ENCODE measurements at regions of chr6 and their contacts with region 1.

Region 1: GRCh38 chr6:15621203-15622044 is 41.4 kb downstream of the DTNBP1 start:
- DNase-seq: peak; percentile 79
- ATAC-seq: peak; percentile 83

Region 2: GRCh38 chr6:14129575-14129974 is 1491.8 kb before region 1 on chr6:
- intact Hi-C with region 1: loop called (anchors 5 kb)
- DNase-seq: peak; percentile 45
- ATAC-seq: peak; percentile 93

Region 3: GRCh38 chr6:15504581-15505350 is 116.7 kb before region 1 on chr6:
- intact Hi-C with region 1: loop called (anchors 5 kb)
- DNase-seq: peak; percentile 82
- ATAC-seq: peak; percentile 75

Region 4: GRCh38 chr6:15518057-15518456 is 103.4 kb before region 1 on chr6:
- intact Hi-C with region 1: loop called (anchors 5 kb)
- DNase-seq: no peak
- ATAC-seq: no peak

Region 5: GRCh38 chr6:15577550-15578171 is 43.8 kb before region 1 on chr6:
- intact Hi-C with region 1: no loop called
- DNase-seq: no peak
- ATAC-seq: no peak

Region 6: DNA sequence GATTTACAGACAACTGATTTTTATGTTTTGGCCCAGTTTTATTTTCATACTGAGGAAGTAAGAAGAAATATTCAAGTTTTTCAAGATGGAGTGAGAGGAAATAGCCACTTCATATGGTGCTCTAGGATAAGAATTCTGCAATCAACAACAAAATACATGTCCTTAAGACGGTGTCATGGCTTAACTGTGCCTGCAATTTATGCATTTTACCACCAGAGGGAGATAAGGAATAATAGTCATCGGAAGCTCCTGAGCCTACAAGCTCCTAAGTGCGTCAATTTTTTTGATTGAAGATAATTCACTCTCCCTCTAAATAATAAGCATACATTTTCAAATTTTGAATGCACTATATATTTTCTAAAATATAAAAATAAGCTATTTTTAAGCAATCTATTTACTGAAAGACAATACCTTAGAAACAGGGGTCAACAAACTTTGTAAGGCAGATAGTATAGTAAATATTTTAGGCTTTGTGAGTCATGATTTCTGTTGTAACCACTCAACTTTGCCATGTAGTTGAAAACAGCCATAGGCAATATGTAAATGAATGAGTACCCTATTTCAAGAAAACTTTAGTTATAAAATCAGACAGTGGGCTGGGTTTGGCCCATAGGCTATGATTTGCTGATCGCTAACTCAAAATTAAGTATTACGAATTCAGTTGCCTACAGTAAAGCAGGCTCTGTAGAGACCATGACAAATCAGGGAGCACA is 272.3 kb after region 1 on chr6:
- intact Hi-C with region 1: no loop called
- DNase-seq: no peak
- ATAC-seq: no peak